ENCODE measurements at regions of chr14 and their contacts with region 1.

Region 1: GRCh38 chr14:57317316-57317715 is 48.5 kb downstream of the AP5M1 start:
- DNase-seq: peak; percentile 77 to 80 (median 78)
- ATAC-seq: peak; percentile 67
- H3K4me3 ChIP-seq: no peak overlapping the region
- H3K27ac ChIP-seq: no peak overlapping the region
- H3K4me1 ChIP-seq: no peaks in the 10 kb centered on the region
- H3K27me3 ChIP-seq: no peaks in the 10 kb centered on the region
- CTCF ChIP-seq: peak; percentile 67 to 93 (median 76)
- POLR2A ChIP-seq: no peak

Region 2: GRCh38 chr14:56491299-56492285 is 825.7 kb before region 1 on chr14:
- intact Hi-C with region 1: loop called (anchors 10 kb)
- DNase-seq: peak; percentile 27 to 40 (median 30)
- ATAC-seq: peak; percentile 56
- H3K4me3 ChIP-seq: no peak overlapping the region
- H3K27ac ChIP-seq: no peak overlapping the region
- H3K4me1 ChIP-seq: peaks cover 5% of the 10 kb centered on the region
- H3K27me3 ChIP-seq: no peaks in the 10 kb centered on the region
- CTCF ChIP-seq: peak; percentile 38 to 74 (median 58)
- POLR2A ChIP-seq: no peak

Region 3: DNA sequence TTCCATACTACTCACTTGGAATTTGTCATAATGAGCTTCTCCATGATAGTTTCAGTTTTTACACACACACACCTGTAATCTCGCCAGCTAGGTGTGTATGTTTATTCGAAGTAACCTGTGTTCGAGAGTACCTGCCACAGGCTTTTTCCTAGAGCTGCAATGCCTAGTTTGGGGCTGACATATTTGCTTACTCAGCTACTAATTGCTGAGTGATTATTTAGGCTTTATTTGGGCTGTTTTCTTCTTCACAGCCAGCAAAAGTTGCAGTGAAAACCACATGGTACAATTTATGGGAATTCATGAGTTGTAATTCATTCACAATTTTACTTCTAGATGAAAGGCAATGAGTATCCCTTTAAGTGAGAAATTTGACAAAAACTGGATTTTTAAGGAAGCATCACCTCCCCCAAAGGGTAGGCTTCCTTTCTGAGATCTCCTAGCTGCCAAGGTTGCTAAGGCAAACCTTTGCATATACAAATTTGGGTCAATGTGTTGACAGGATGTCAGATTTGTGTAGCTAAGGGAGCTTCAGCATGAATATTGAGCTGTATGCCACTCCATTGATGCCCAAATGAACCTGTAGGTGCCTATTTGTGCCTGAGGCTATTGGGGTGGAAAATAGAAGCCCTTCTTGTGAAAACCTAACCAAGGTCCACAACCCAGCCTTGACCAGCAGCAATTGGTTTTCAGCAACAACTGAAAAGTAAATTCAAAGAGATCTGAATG is 398.3 kb before region 1 on chr14:
- intact Hi-C with region 1: no loop called
- DNase-seq: no peak
- ATAC-seq: no peak
- H3K4me3 ChIP-seq: no peak overlapping the region
- H3K27ac ChIP-seq: no peak overlapping the region
- H3K4me1 ChIP-seq: no peaks in the 10 kb centered on the region
- H3K27me3 ChIP-seq: no peaks in the 10 kb centered on the region
- CTCF ChIP-seq: no peak
- POLR2A ChIP-seq: no peak

Region 4: DNA sequence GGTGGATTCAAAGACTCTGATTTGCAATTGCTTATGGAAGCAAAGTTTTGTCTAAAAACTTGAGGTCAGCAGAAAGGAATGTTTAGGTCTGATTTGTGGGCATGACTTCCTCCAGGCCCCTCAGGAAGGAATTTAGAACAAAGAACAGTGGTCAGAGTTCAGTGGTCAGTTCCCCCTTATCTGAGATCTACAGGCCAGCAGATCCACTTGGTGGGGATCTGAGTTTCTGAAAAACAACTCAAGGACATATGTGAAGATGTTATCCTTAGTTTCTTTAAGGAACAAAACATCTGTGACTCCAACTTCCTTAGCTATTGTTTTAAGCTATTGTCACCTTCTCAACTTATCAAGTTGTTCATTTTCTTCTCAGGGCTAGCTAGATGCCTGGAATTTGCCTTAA is 45.0 kb after region 1 on chr14:
- intact Hi-C with region 1: no loop called
- DNase-seq: no peak
- ATAC-seq: no peak
- H3K4me3 ChIP-seq: no peak overlapping the region
- H3K27ac ChIP-seq: no peak overlapping the region
- H3K4me1 ChIP-seq: no peaks in the 10 kb centered on the region
- H3K27me3 ChIP-seq: no peaks in the 10 kb centered on the region
- CTCF ChIP-seq: no peak
- POLR2A ChIP-seq: no peak